ENCODE measurements at regions of chr18 and their contacts with region 1.

Region 1: DNA sequence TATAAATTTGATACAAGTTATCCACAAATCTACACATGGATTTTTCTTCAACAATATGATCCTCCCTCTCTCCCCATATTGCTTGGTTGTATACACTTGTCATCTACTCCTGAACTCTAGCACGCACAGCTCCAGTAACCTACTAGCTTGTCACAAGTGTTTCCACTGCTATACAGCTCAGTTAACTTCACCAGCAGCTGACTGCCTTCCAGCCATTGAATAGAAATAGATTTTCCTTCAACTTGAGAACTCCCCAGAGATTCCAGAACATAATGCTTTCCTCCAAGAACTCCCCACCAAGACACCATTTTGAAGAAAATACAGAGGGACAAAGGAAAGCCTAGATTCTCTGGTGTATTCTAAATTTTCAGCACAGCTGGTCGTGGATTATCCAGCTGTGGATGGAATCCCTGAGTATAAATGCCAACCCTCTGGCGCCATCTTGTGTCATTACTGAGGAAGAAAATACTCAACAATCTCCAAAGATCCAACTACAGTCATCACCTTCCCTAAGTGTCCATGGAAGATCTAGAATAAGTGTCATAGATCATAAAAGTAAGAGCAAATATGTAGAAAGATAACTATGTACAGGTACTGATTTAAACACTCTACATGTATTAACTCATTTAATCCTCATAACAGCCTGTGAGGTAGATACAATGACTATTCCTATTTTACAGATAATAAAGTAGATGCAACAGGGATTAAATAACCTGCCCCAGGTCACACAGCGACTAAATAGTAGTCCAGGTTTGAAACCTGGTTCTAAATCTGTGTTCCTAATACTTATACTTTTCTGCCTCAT is 156.7 kb downstream of the ARHGAP28 start:
- DNase-seq: peak; percentile 73
- ATAC-seq: peak; percentile 96
- H3K4me3 ChIP-seq: no peak overlapping the region
- H3K27ac ChIP-seq: no peak overlapping the region
- H3K4me1 ChIP-seq: no peaks in the 10 kb centered on the region
- H3K27me3 ChIP-seq: no peaks in the 10 kb centered on the region
- CTCF ChIP-seq: peak; percentile 90

Region 2: GRCh38 chr18:5851998-5852397 is 1034.2 kb before region 1 on chr18:
- CTCF ChIA-PET with region 1: no interaction called
- POLR2A ChIA-PET with region 1: no interaction called
- intact Hi-C with region 1: loop called (anchors 5 kb)
- DNase-seq: peak; percentile 36
- ATAC-seq: peak; percentile 48; the same call in 1 of the 2 replicates
- H3K4me3 ChIP-seq: no peak overlapping the region
- H3K27ac ChIP-seq: no peak overlapping the region
- H3K4me1 ChIP-seq: no peaks in the 10 kb centered on the region
- H3K27me3 ChIP-seq: peaks cover 59% of the 10 kb centered on the region
- CTCF ChIP-seq: peak; percentile 61

Region 3: GRCh38 chr18:5868218-5869115 is 1017.7 kb before region 1 on chr18:
- CTCF ChIA-PET with region 1: no interaction called
- POLR2A ChIA-PET with region 1: no interaction called
- intact Hi-C with region 1: loop called (anchors 1 kb)
- DNase-seq: peak; percentile 94
- ATAC-seq: peak; percentile 100
- H3K4me3 ChIP-seq: no peak overlapping the region
- H3K27ac ChIP-seq: no peak overlapping the region
- H3K4me1 ChIP-seq: no peaks in the 10 kb centered on the region
- H3K27me3 ChIP-seq: no peaks in the 10 kb centered on the region
- CTCF ChIP-seq: peak; percentile 94